GM12878 (cell line): ENCODE measurements at regions of chr4 and their contacts with region 1.

Region 1: GRCh38 chr4:184282251-184282713 is 64.6 kb upstream of the ENPP6 start:
- DNase-seq: peak; percentile 80
- ATAC-seq: peak; percentile 63
- H3K4me3 ChIP-seq: peak overlapping the region; percentile 25
- H3K27ac ChIP-seq: peak overlapping the region; percentile 99
- H3K4me1 ChIP-seq: peaks cover 69% of the 10 kb centered on the region
- H3K27me3 ChIP-seq: no peaks in the 10 kb centered on the region
- CTCF ChIP-seq: peak; percentile 50 to 70 (median 61)
- EP300 ChIP-seq: peak in 1 of 2 experiments; percentile 58; a peak in 2 of 4 replicates
- POLR2A ChIP-seq: peak; percentile 62
- RAD21 ChIP-seq: peak; percentile 69

Region 2: DNA sequence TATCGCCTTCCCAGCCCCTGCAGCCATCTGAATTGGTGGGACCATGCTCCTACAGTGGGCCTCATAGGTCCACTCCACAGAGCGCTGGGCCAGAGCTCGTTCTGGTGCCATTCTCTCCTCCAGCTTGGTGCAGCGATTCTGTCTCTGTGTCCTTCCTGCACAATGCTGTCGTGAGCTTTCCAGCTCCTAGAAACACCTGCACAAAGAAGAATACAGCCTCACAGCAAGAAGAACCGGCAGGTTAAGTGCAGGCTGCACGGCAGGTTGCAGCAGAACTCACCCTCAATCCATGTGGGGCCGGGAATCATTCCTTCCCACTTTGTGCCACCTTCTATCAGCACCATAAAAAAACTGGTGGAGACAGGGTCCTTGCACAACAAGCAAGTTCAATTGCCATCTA is 36.6 kb after region 1 on chr4:
- CTCF ChIA-PET with region 1: interaction called, 83 read pairs
- POLR2A ChIA-PET with region 1: interaction called, 149 read pairs
- RAD21 ChIA-PET with region 1: interaction called, 149 read pairs
- SMC1A ChIA-PET with region 1: interaction called, 150 read pairs
- in situ Hi-C with region 1: no loop called
- intact Hi-C with region 1: loop called (anchors 1 kb)
- DNase-seq: no peak
- ATAC-seq: peak; percentile 1
- H3K4me3 ChIP-seq: peak overlapping the region; percentile 20; the same call in 1 of the 2 replicates
- H3K27ac ChIP-seq: peak overlapping the region; percentile 92
- H3K4me1 ChIP-seq: peaks cover 52% of the 10 kb centered on the region
- H3K27me3 ChIP-seq: no peaks in the 10 kb centered on the region
- CTCF ChIP-seq: no peak
- EP300 ChIP-seq: no peak
- POLR2A ChIP-seq: no peak
- RAD21 ChIP-seq: no peak

Region 3: GRCh38 chr4:184355111-184355604 is 72.9 kb after region 1 on chr4:
- CTCF ChIA-PET with region 1: interaction called, 32 read pairs
- POLR2A ChIA-PET with region 1: interaction called, 164 read pairs
- RAD21 ChIA-PET with region 1: interaction called, 193 read pairs
- SMC1A ChIA-PET with region 1: interaction called, 188 read pairs
- in situ Hi-C with region 1: no loop called
- intact Hi-C with region 1: loop called (anchors 1 kb)
- DNase-seq: peak; percentile 84
- ATAC-seq: peak; percentile 15
- H3K4me3 ChIP-seq: no peak overlapping the region
- H3K27ac ChIP-seq: peak overlapping the region; percentile 99
- H3K4me1 ChIP-seq: peaks cover 16% of the 10 kb centered on the region
- H3K27me3 ChIP-seq: no peaks in the 10 kb centered on the region
- CTCF ChIP-seq: no peak
- EP300 ChIP-seq: peak; percentile 52 to 63; a peak in 2 of 4 replicates
- POLR2A ChIP-seq: no peak
- RAD21 ChIP-seq: peak; percentile 28

Region 4: DNA sequence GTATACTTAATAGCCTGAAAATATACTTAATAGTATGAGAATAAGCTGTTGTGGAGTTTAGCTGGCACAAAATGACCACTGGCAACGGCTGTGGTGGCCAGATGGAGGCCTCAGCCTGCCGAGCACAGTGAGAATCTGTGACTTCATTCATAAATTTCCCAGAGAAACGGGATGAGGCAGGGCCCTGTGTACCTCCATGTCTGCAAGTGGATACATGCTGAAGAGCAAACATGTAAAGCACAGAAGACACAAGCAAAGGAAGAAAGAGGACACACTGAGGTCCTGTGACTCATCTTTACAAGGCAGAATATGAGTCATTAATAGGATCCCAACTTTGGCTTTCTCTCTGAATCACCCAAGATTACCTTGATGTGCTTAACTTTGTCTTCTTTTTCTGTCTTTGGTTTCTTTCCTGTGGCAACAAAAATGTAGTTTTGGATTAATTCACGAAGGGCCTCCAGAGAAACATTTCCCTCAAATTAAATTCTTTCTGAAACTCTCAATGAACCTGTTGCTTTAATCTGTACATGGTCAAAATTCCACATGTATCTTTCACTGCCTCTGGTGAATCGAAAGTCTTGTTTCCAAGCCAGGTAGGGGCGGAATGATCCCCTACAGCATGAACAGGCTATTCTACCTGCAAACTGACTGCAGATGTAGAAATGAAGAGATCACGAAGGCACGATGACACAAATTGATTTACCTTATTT is 135.7 kb after region 1 on chr4:
- CTCF ChIA-PET with region 1: interaction called, 3 read pairs
- POLR2A ChIA-PET with region 1: interaction called, 4 read pairs
- RAD21 ChIA-PET with region 1: interaction called, 10 read pairs
- SMC1A ChIA-PET with region 1: interaction called, 6 read pairs
- in situ Hi-C with region 1: no loop called
- intact Hi-C with region 1: loop called (anchors 1 kb)
- DNase-seq: peak; percentile 78
- ATAC-seq: peak; percentile 72
- H3K4me3 ChIP-seq: no peak overlapping the region
- H3K27ac ChIP-seq: peak overlapping the region; percentile 90
- H3K4me1 ChIP-seq: peaks cover 64% of the 10 kb centered on the region
- H3K27me3 ChIP-seq: no peaks in the 10 kb centered on the region
- CTCF ChIP-seq: no peak
- EP300 ChIP-seq: peak in 1 of 2 experiments; percentile 75; a peak in 1 of 4 replicates
- POLR2A ChIP-seq: 0 out of 2 replicates have a peak, but pooled peaks have one; percentile 23
- RAD21 ChIP-seq: no peak

Region 5: DNA sequence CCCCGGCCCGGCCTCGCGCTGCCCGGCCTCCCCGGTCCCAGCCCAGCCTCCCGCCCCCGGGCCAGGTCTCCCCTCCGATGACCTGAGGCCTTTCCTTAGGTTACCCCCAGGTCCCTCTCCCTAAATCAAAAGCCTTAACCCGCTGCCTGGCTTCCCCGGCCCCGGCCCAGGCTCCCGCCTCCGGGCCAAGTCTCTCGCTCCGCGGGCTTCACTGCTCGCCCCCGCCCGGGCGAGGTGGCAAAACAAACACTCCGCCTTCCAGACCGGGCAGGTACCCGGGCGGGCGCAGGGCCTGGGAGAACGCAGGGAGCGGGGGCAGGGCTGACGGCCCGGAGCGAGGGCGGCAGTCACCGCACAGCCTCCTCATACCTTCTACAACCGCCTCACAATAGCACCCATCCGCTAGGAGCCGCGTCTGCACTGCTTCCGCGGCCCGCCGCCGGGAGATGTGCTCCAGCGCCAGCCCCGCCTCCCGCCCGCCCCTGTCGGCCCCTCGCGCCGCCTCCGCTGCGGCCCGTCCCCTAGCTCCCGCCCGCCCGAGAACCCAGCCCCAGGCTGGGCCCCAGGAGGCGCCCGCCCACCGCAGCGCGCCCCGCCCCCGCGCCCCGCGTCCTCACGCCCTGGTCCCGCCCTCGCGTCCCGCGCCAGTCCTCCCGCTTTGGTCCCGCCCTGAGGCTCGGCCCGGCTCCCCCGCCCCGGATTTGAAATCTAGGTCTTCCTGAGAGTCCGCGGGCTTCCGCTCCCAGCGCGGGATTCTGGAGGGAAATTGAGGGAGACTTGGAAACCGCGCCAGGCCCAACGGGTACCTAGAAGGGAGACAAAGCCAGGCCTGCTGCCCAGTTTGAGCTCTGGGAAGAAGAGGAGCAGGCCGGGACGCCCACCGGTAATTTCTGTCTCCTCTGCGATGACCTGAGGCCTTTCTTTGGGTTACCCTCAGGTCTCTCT is 367.0 kb after region 1 on chr4 and contains the starts of genes CASP3 and PRIMPOL:
- CTCF ChIA-PET with region 1: no interaction called
- POLR2A ChIA-PET with region 1: interaction called, 3 read pairs
- RAD21 ChIA-PET with region 1: interaction called, 7 read pairs
- SMC1A ChIA-PET with region 1: no interaction called
- in situ Hi-C with region 1: no loop called
- intact Hi-C with region 1: loop called (anchors 5 kb)
- DNase-seq: peak; percentile 60
- ATAC-seq: peak; percentile 90
- H3K4me3 ChIP-seq: peak within 1 kb of the TSS; percentile 98
- H3K27ac ChIP-seq: peak within 1 kb of the TSS; percentile 85
- H3K4me1 ChIP-seq: peaks cover 12% of the 10 kb centered on the region; the same call in 1 of the 2 replicates
- H3K27me3 ChIP-seq: no peaks in the 10 kb centered on the region
- CTCF ChIP-seq: peak in 2 of 3 experiments; percentile 26 to 43; a peak in 3 of 6 replicates
- EP300 ChIP-seq: no peak
- POLR2A ChIP-seq: peak; percentile 93
- RAD21 ChIP-seq: peak; percentile 28
- polyA plus RNA-seq, gene CASP3: 50.0 to 59.0 TPM
- polyA plus RNA-seq, gene PRIMPOL: 10.6 to 11.5 TPM

Region 6: DNA sequence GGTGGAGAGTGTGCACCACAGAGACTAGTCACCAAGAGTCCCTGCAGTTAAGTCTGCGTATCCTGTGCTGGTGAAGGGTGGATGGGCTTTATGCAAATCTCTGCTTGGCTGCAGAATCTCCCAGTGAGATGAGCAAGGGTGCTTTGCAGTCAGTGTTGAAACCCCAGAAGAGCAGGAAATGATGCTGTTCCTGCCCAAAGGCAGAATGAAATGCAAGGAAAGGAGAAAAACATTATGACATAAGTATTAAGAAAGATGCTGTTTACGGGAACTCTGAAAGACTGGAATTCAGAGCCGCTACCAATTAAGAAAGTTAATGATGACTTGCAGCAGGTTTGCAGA is 568.9 kb after region 1 on chr4:
- CTCF ChIA-PET with region 1: no interaction called
- POLR2A ChIA-PET with region 1: no interaction called
- RAD21 ChIA-PET with region 1: no interaction called
- SMC1A ChIA-PET with region 1: interaction called, 3 read pairs
- in situ Hi-C with region 1: no loop called
- intact Hi-C with region 1: loop called (anchors 10 kb)
- DNase-seq: peak; percentile 81
- ATAC-seq: peak; percentile 76
- H3K4me3 ChIP-seq: peak overlapping the region; percentile 38
- H3K27ac ChIP-seq: peak overlapping the region; percentile 54
- H3K4me1 ChIP-seq: peaks cover 63% of the 10 kb centered on the region
- H3K27me3 ChIP-seq: no peaks in the 10 kb centered on the region
- CTCF ChIP-seq: no peak
- EP300 ChIP-seq: peak; percentile 40 to 41; a peak in 3 of 4 replicates
- POLR2A ChIP-seq: no peak
- RAD21 ChIP-seq: no peak

Region 7: GRCh38 chr4:185020293-185020808 is 738.1 kb after region 1 on chr4:
- CTCF ChIA-PET with region 1: no interaction called
- POLR2A ChIA-PET with region 1: no interaction called
- RAD21 ChIA-PET with region 1: no interaction called
- SMC1A ChIA-PET with region 1: no interaction called
- in situ Hi-C with region 1: no loop called
- intact Hi-C with region 1: no loop called
- DNase-seq: no peak
- ATAC-seq: no peak
- H3K4me3 ChIP-seq: no peak overlapping the region
- H3K27ac ChIP-seq: no peak overlapping the region
- H3K4me1 ChIP-seq: no peaks in the 10 kb centered on the region
- H3K27me3 ChIP-seq: peaks cover 11 to 24% of the 10 kb centered on the region in 2 experiments
- CTCF ChIP-seq: no peak
- EP300 ChIP-seq: no peak
- POLR2A ChIP-seq: no peak
- RAD21 ChIP-seq: no peak